K562 (cell line): ENCODE measurements at regions of chr7 and their contacts with region 1.

Region 1: DNA sequence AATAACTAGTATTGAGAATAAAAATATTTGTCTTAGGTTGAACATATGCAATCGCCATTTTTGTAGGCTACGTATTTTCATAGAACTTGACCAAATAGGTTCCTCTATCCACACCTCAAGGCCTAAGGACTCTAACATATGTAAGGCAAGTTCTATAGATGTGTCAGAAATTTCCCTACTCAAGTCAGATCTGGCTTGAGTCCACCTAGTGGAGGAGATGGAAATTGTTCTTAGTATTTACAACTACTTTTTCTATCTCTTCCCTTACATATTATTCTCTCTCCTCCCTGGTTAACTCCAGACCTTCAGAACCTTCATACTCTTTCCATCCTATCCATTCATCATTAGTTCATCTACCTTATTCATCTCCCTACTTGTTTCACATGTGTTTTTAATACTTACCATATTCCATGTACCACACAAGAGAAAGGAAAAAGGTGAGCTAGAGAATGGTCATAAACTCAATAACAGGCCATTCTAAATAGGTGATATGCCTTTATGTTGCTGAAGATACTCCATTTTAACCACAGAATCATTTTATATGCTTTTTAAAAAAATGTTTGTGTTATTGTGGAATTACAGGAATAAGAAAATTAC is 174.5 kb upstream of the HDAC9 start:
- DNase-seq: peak; percentile 22 to 53 (median 32)
- ATAC-seq: peak; percentile 89
- H3K4me3 ChIP-seq: no peak overlapping the region
- H3K27ac ChIP-seq: no peak overlapping the region
- H3K4me1 ChIP-seq: peaks cover 0 to 8% of the 10 kb centered on the region in 2 experiments; a peak in 1 of 5 replicates
- H3K27me3 ChIP-seq: no peaks in the 10 kb centered on the region
- CTCF ChIP-seq: peak; percentile 20 to 61 (median 45); a peak in 4 of 6 replicates
- EP300 ChIP-seq: no peak
- POLR2A ChIP-seq: no peak
- RAD21 ChIP-seq: peak; percentile 45 to 69

Region 2: DNA sequence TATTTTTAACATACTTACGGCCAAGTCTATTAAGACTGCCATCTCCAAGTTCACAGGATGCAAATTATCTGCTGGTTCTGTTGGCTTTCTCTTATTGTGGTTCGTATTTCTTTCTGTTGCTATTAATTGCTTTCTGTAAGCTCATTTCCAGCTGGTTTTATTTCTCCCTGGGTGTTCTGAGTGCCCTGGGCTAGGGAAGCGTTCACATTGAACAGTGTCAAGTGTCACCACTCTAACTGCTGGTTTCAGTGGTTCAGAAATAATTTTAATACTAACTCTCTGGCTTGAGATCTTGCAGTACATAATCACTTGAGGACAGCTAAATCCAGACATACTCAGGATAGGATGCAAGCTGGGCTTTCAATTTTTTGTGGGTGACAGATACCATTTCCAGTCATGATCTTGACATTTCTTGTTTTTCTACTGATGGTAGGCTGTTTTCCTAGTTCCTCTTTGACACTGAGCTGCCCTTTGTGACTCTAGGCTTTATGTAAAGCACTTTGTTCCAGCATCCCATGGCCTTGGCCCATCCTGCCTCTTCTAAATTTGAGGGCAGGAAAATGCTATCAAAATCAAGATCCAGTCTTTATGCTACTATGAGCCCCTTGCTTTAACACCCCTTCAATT is 498.4 kb before region 1 on chr7:
- CTCF ChIA-PET with region 1: no interaction called
- POLR2A ChIA-PET with region 1: no interaction called
- in situ Hi-C with region 1: no loop called
- intact Hi-C with region 1: no loop called
- DNase-seq: no peak
- ATAC-seq: no peak
- H3K4me3 ChIP-seq: no peak overlapping the region
- H3K27ac ChIP-seq: no peak overlapping the region
- H3K4me1 ChIP-seq: no peaks in the 10 kb centered on the region
- H3K27me3 ChIP-seq: no peaks in the 10 kb centered on the region
- CTCF ChIP-seq: no peak
- EP300 ChIP-seq: no peak
- POLR2A ChIP-seq: no peak
- RAD21 ChIP-seq: no peak

Region 3: DNA sequence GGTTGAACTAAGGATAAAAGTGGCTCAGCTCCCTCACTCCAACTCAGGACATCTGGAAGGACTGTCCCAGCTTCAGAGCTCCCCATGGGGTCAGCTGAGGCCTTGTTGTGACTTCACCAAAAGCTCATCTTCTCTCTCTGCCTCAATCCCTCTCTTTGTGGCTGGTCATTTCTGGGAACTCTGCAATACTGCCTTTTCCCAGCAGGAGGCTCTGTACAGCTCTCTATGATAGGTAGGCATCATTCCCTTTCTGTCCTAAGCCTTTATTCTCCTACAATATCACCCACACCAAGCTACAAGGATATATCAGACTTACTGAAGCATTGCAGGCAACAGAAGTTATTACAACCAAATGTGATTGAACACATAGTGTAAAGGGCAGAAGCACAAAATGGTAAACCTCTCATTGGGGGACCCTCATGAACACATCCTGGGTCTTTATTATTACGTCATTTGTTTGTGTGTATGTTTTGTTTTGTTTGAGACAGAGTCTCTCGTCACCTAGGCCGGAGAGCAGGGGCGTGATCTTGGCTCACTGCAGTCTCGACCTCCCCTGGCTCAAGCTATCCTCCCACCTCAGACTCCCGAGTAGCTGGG is 256.7 kb before region 1 on chr7:
- CTCF ChIA-PET with region 1: no interaction called
- POLR2A ChIA-PET with region 1: no interaction called
- in situ Hi-C with region 1: loop called (anchors 25 kb)
- intact Hi-C with region 1: loop called (anchors 5 kb)
- DNase-seq: peak; percentile 23 to 54 (median 30)
- ATAC-seq: peak; percentile 95
- H3K4me3 ChIP-seq: no peak overlapping the region
- H3K27ac ChIP-seq: no peak overlapping the region
- H3K4me1 ChIP-seq: no peaks in the 10 kb centered on the region; a peak in 1 of 5 replicates
- H3K27me3 ChIP-seq: no peaks in the 10 kb centered on the region
- CTCF ChIP-seq: peak; percentile 65 to 75 (median 72)
- EP300 ChIP-seq: no peak
- POLR2A ChIP-seq: no peak
- RAD21 ChIP-seq: peak; percentile 69 to 92

Region 4: GRCh38 chr7:18225067-18225466 is 96.0 kb before region 1 on chr7:
- CTCF ChIA-PET with region 1: no interaction called
- POLR2A ChIA-PET with region 1: no interaction called
- in situ Hi-C with region 1: no loop called
- intact Hi-C with region 1: loop called (anchors 5 kb)
- DNase-seq: no peak
- ATAC-seq: no peak
- H3K4me3 ChIP-seq: no peak overlapping the region
- H3K27ac ChIP-seq: no peak overlapping the region
- H3K4me1 ChIP-seq: no peaks in the 10 kb centered on the region
- H3K27me3 ChIP-seq: no peaks in the 10 kb centered on the region
- CTCF ChIP-seq: no peak
- EP300 ChIP-seq: no peak
- POLR2A ChIP-seq: no peak
- RAD21 ChIP-seq: no peak